Naive thymus-derived CD4-positive, alpha-beta T cell (primary cell): ENCODE measurements at regions of chr4 and their contacts with region 1.

Region 1: DNA sequence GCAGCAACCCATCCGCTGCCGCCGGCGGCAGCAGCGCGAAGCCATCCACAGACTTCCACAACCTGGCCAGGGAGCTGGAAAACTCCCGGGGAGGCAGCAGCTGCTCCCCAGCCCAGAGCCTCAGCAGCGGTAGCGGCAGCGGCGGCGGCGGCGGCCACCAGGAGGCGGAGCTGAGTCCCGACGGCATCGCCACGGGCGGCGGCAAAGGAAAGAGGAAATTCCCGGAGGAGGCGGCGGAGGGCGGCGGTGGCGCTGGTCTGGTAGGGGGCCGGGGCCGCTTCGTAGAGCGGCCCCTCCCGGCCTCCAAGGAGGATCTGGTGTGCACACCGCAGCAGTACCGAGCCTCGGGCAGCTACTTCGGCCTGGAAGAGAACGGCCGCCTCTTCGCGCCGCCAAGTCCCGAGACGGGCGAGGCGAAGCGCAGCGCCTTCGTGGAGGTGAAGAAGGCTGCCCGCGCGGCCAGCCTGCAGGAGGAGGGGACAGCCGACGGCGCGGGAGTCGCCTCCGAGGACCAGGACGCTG is 4.9 kb downstream of the PRDM8 start:
- DNase-seq: peak; percentile 55 to 86 (median 70)
- ATAC-seq: peak; percentile 78
- H3K4me3 ChIP-seq: peak overlapping the region; percentile 63
- H3K4me3 Mint-ChIP-seq: peak overlapping the region; percentile 79 to 91 (median 84)
- H3K27ac ChIP-seq: peak overlapping the region; percentile 75
- H3K27ac Mint-ChIP-seq: peak overlapping the region in 8 of 9 donors; percentile 2 to 86 (median 76)
- H3K4me1 ChIP-seq: peaks cover 5 to 8% of the 10 kb centered on the region in 2 donors
- H3K4me1 Mint-ChIP-seq: peaks cover 18 to 30% (median 27%) of the 10 kb centered on the region in 7 donors
- H3K27me3 ChIP-seq: no peaks in the 10 kb centered on the region
- H3K27me3 Mint-ChIP-seq: peaks cover 12 to 53% (median 12%) of the 10 kb centered on the region in 5 donors

Region 2: DNA sequence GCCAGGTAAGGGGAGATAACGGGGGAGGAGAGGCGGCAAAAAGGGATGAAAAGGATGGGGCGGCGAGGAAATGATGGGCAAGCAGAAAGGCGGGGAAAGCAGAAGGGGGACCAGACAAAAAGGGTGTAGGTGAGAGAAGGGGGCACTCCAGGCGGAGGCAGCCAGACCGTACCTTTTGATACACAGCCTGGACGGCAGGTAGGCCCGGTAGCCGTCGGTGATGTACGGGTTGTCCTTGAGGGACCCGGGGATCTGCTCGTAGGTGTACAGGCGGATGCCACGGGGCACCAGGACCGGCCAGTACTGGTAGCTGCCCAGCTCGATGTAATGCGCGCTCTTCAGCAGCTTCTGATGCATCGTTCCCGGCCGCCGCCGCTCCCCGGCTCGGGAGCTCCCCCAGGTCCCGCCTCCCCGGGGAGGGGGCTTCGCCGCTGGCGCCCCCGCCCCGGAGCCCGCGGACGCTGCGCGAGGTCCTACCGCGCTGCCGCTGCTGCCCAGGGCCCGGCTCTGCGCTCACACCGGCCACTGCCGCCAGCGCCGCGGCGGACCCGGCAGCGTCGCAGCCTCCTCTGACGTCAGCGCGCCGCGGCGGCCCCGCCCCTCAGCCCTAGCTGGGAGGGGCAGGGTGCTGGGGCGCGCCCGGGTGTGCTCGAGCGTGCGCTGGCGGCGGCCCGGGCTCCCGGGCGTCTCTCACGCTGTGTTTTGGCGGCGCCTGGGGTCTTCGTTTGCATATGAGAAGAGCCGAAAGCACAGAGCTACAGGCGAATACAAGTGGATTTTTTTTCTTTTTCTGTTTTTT is 1263.2 kb before region 1 on chr4 and contains the start of gene PAQR3:
- CTCF ChIA-PET with region 1: no interaction called
- POLR2A ChIA-PET with region 1: interaction called, 3 read pairs
- intact Hi-C with region 1: loop called (anchors 1 to 5 kb)
- DNase-seq: peak; percentile 70 to 91 (median 86)
- ATAC-seq: peak; percentile 98
- H3K4me3 ChIP-seq: peak within 1 kb of the TSS; percentile 86
- H3K4me3 Mint-ChIP-seq: peak within 1 kb of the TSS; percentile 92 to 100 (median 98)
- H3K27ac ChIP-seq: peak within 1 kb of the TSS; percentile 82
- H3K27ac Mint-ChIP-seq: peak within 1 kb of the TSS; percentile 82 to 97 (median 92)
- H3K4me1 ChIP-seq: peaks cover 5 to 14% of the 10 kb centered on the region in 2 donors
- H3K4me1 Mint-ChIP-seq: peaks cover 23 to 54% (median 39%) of the 10 kb centered on the region in 7 donors
- H3K27me3 ChIP-seq: no peaks in the 10 kb centered on the region
- H3K27me3 Mint-ChIP-seq: peaks cover 8 to 18% (median 11%) of the 10 kb centered on the region in 5 donors
- total RNA-seq, gene PAQR3: 13.1 to 24.3 (median 15.8) TPM

Region 3: DNA sequence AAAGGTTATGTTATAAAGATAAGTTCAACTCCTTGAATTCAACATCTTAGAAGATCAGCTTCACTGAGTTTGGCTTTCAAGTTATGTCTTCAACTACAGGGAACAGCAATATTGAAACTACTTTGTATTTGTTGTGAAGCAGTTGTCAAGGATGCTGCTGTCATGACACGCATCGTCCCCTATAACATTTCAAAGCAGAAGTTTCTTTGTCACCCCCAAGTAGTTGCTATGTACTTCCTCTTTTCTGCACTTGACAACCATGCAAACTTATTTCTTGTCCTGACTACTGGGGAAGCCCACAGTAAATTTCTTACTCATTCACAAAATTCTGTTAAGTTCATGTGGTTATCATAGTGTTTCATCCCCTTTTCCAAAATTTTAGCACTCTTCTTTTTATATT is 143.5 kb before region 1 on chr4:
- CTCF ChIA-PET with region 1: no interaction called
- POLR2A ChIA-PET with region 1: interaction called, 3 read pairs
- intact Hi-C with region 1: loop called (anchors 5 kb)
- DNase-seq: peak in 7 of 9 donors; percentile 53 to 89 (median 84)
- ATAC-seq: peak; percentile 96
- H3K4me3 ChIP-seq: no peak overlapping the region
- H3K4me3 Mint-ChIP-seq: peak overlapping the region; percentile 54 to 86 (median 74)
- H3K27ac ChIP-seq: peak overlapping the region; percentile 86
- H3K27ac Mint-ChIP-seq: peak overlapping the region; percentile 91 to 99 (median 96)
- H3K4me1 ChIP-seq: peaks cover 10 to 13% of the 10 kb centered on the region in 2 donors
- H3K4me1 Mint-ChIP-seq: peaks cover 12 to 50% (median 42%) of the 10 kb centered on the region in 7 donors
- H3K27me3 ChIP-seq: no peaks in the 10 kb centered on the region
- H3K27me3 Mint-ChIP-seq: no peaks in the 10 kb centered on the region

Region 4: GRCh38 chr4:80138551-80139538 is 63.4 kb before region 1 on chr4:
- CTCF ChIA-PET with region 1: interaction called, 9 read pairs
- POLR2A ChIA-PET with region 1: interaction called, 3 read pairs
- intact Hi-C with region 1: loop called (anchors 1 to 2 kb)
- DNase-seq: peak in 8 of 9 donors; percentile 50 to 77 (median 64)
- ATAC-seq: peak; percentile 89
- H3K4me3 ChIP-seq: no peak overlapping the region
- H3K4me3 Mint-ChIP-seq: peak overlapping the region in 7 of 10 donors; percentile 24 to 65 (median 48)
- H3K27ac ChIP-seq: no peak overlapping the region
- H3K27ac Mint-ChIP-seq: peak overlapping the region; percentile 58 to 91 (median 84)
- H3K4me1 ChIP-seq: peaks cover 20 to 32% of the 10 kb centered on the region in 2 donors
- H3K4me1 Mint-ChIP-seq: peaks cover 30 to 71% (median 56%) of the 10 kb centered on the region in 7 donors
- H3K27me3 ChIP-seq: no peaks in the 10 kb centered on the region
- H3K27me3 Mint-ChIP-seq: no peaks in the 10 kb centered on the region

Region 5: DNA sequence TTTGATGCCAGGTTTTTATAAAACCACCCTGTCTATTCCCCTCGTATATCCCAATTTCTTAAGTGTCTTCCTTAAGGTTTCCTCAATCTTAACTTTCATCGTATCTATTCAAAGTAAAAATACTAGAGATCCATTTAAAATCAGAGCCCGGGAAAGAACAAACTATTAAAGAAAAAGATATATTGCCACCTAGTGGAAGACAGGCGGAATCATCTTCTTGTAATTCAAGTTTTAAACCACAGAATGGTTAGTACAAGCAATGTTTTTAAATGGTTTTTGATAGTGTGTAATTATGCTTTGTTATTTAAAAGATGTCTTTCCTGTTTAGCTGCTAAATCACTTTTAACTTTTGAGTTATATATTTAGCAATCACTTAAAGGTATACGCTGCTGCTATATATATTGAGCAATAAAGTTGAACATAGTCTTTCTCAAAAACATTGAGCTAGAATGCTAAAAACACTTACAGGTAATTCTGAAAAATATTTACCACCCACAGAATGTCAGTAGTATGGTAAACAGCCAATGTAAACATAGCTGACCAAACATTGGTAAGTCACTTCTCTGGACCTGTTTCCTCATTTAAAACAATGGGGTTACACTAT is 13.3 kb after region 1 on chr4:
- CTCF ChIA-PET with region 1: interaction called, 16 read pairs
- POLR2A ChIA-PET with region 1: interaction called, 6 read pairs
- intact Hi-C with region 1: loop called (anchors 1 kb)
- DNase-seq: peak in 6 of 9 donors; percentile 28 to 57 (median 38)
- ATAC-seq: peak; percentile 61
- H3K4me3 ChIP-seq: no peak overlapping the region
- H3K4me3 Mint-ChIP-seq: peak overlapping the region in 2 of 10 donors; percentile 20 to 28
- H3K27ac ChIP-seq: no peak overlapping the region
- H3K27ac Mint-ChIP-seq: no peak overlapping the region
- H3K4me1 ChIP-seq: no peaks in the 10 kb centered on the region
- H3K4me1 Mint-ChIP-seq: peaks cover 0 to 7% (median 0%) of the 10 kb centered on the region in 7 donors
- H3K27me3 ChIP-seq: peaks cover 0 to 4% of the 10 kb centered on the region in 2 donors
- H3K27me3 Mint-ChIP-seq: peaks cover 0 to 61% (median 37%) of the 10 kb centered on the region in 5 donors